ENCODE measurements at regions of chr17 and their contacts with region 1.

Region 1: DNA sequence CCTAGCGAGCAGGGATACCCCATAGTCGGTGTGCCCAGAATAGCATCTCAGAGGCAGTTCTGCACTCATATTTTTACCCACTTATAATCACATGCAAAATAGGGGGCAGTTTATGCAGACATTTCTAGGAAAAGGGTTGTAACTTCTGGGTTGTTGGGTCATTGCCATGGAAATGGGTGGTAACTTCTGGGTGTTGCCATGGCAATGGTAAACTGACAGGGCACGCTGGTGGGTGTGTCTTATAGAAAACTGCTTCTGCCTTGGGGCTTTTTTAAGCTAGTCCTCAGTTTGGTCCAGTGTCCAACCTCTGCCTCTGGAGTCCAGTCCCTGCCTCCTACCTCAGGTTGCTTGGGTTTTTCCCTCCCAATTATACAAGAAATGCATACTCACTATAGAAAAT is 7.4 kb upstream of the SPAG9 start:
- DNase-seq: peak in 2 of 3 donors; percentile 54 to 64
- ATAC-seq: peak; percentile 42 to 47
- H3K4me3 ChIP-seq: no peak overlapping the region
- H3K27ac ChIP-seq: no peak overlapping the region
- H3K4me1 ChIP-seq: no peaks in the 10 kb centered on the region
- H3K27me3 ChIP-seq: no peaks in the 10 kb centered on the region

Region 2: DNA sequence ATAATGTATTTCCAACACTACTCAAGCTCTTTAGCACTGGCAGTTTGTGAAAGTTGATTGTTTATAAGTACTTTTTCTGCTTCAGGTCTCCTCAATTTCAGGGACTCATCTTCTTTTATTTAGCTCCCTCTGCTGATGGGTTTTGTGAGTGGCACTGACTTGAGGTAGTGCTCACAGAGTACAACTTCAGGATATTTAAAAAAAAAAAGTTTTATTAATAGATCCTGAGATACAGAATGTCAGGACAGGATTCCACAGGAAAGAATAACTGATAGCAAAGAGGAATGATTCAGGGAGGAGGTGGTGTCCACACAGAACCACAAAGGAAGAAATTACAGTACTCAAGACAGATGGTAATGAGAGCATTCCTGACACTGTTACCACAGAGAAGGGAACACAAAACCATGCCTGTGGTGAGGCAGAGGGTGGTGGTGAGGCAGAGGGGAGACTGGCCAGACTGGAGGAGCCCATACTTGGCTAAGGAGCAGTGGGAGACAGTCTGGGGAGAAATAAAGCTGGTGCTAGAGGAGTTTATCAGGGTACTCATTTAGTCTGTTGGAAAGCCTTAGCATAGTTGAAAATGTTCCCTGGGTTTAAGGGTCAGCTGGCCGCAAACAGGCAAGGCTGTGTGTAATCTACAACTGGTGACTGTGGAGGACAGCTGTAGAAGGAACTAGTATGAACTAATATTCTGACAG is 71.1 kb before region 1 on chr17:
- intact Hi-C with region 1: loop called in 1 of 4 experiments (anchors 2 kb)
- DNase-seq: no peak
- ATAC-seq: peak; percentile 83 to 89
- H3K4me3 ChIP-seq: no peak overlapping the region
- H3K27ac ChIP-seq: peak overlapping the region; percentile 84
- H3K4me1 ChIP-seq: peaks cover 4% of the 10 kb centered on the region
- H3K27me3 ChIP-seq: no peaks in the 10 kb centered on the region

Region 3: GRCh38 chr17:51245535-51245934 is 117.5 kb after region 1 on chr17:
- intact Hi-C with region 1: no loop called
- DNase-seq: no peak
- ATAC-seq: no peak
- H3K4me3 ChIP-seq: no peak overlapping the region
- H3K27ac ChIP-seq: no peak overlapping the region
- H3K4me1 ChIP-seq: no peaks in the 10 kb centered on the region
- H3K27me3 ChIP-seq: no peaks in the 10 kb centered on the region